WTC11 (cell line): ENCODE measurements at regions of chr1 and their contacts with region 1.

Region 1: GRCh38 chr1:87084244-87084836 is 169.9 kb downstream of the HS2ST1 start:
- DNase-seq: no peak
- ATAC-seq: no peak
- H3K4me3 Mint-ChIP-seq: no peak overlapping the region
- H3K27ac Mint-ChIP-seq: no peak overlapping the region
- H3K4me1 Mint-ChIP-seq: peaks cover 9% of the 10 kb centered on the region
- H3K27me3 Mint-ChIP-seq: no peaks in the 10 kb centered on the region
- CTCF ChIP-seq: peak; percentile 29; the same call in 1 of the 2 replicates

Region 2: DNA sequence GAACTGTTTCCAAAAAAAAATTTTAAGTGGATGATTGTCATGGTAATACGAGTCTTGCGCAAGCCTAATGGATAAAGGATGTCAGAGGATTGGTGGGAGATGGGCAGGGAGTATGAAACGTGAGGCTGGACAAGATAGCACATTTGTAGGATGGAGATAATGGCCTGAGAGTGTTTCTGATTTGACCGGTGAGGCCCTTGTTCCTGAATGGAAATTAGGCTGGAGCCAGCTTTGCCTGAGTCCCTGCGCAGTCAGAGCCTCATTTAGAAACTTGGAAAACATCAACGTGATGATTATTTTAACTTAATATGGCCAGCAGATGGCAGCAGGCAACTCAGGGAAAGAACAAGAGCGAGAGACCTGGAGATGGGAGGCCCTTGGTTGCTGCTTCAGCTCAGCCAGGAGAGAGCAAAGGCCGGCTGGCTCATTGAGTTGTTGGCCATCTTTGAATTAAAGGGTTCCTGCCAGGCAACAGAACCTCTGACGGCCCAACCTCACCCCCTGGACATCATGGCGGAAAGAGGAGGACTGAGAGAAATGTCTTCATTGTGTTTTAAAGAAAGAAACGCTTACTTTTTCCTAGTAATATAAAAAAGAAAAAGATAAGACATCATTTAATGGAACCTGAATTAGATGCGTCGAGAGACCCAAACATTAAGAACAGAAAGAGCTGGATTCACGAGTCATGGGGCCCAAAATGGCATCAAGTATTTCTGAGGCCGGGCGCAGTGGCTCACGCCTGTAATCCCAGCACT is 250.7 kb before region 1 on chr1:
- CTCF ChIA-PET with region 1: interaction called, 14 read pairs
- POLR2A ChIA-PET with region 1: no interaction called
- DNase-seq: peak; percentile 73
- ATAC-seq: peak; percentile 98
- H3K4me3 Mint-ChIP-seq: no peak overlapping the region
- H3K27ac Mint-ChIP-seq: peak overlapping the region; percentile 52; the same call in 1 of the 2 replicates
- H3K4me1 Mint-ChIP-seq: peaks cover 5% of the 10 kb centered on the region
- H3K27me3 Mint-ChIP-seq: no peaks in the 10 kb centered on the region
- CTCF ChIP-seq: peak; percentile 35; the same call in 1 of the 2 replicates

Region 3: GRCh38 chr1:87061742-87062156 is 22.6 kb before region 1 on chr1:
- CTCF ChIA-PET with region 1: no interaction called
- POLR2A ChIA-PET with region 1: no interaction called
- DNase-seq: no peak
- ATAC-seq: no peak
- H3K4me3 Mint-ChIP-seq: no peak overlapping the region
- H3K27ac Mint-ChIP-seq: no peak overlapping the region
- H3K4me1 Mint-ChIP-seq: no peaks in the 10 kb centered on the region
- H3K27me3 Mint-ChIP-seq: no peaks in the 10 kb centered on the region
- CTCF ChIP-seq: no peak

Region 4: DNA sequence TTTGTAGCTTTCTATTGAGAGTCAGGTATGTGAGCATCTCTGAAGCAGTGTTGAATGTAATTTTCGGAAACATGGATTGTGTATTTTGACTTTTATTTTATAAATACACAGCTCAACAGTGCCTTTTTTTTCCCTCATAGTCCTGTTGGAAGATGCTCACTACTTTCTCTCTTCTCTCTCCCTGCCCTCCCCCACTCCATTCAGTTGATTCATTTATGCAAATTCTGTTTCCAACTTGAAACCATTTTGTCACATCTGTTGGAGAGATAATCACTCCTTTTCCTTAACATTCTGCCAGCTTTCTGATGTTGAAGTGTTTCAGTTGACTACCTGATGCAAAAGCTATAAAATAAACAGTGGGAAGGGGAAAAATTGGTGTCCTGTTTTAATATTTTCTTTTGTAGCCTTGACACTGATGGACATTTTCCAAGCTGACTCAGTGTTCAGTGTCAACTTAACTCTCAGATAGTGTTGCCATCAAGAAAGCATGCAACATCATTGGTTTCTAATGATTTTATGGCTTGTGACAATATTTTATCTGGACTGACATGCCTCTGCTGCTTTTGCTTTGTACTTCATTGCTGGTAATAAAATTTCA is 24.6 kb after region 1 on chr1:
- CTCF ChIA-PET with region 1: no interaction called
- POLR2A ChIA-PET with region 1: no interaction called
- DNase-seq: no peak
- ATAC-seq: no peak
- H3K4me3 Mint-ChIP-seq: no peak overlapping the region
- H3K27ac Mint-ChIP-seq: no peak overlapping the region
- H3K4me1 Mint-ChIP-seq: peaks cover 15% of the 10 kb centered on the region
- H3K27me3 Mint-ChIP-seq: no peaks in the 10 kb centered on the region
- CTCF ChIP-seq: no peak